Naive thymus-derived CD4-positive, alpha-beta T cell (primary cell): ENCODE measurements at regions of chr6 and their contacts with region 1.

Region 1: GRCh38 chr6:27295301-27296081 is 16.6 kb downstream of the POM121L2 start:
- DNase-seq: no peak
- ATAC-seq: no peak
- H3K4me3 ChIP-seq: no peak overlapping the region
- H3K4me3 Mint-ChIP-seq: peak overlapping the region in 4 of 10 donors; percentile 0 to 81 (median 34)
- H3K27ac ChIP-seq: no peak overlapping the region
- H3K27ac Mint-ChIP-seq: peak overlapping the region in 6 of 9 donors; percentile 44 to 89 (median 57)
- H3K4me1 ChIP-seq: no peaks in the 10 kb centered on the region
- H3K4me1 Mint-ChIP-seq: peaks cover 0 to 4% (median 0%) of the 10 kb centered on the region in 7 donors
- H3K27me3 ChIP-seq: peaks cover 21 to 66% of the 10 kb centered on the region in 2 donors
- H3K27me3 Mint-ChIP-seq: peaks cover 65 to 94% (median 87%) of the 10 kb centered on the region in 5 donors

Region 2: DNA sequence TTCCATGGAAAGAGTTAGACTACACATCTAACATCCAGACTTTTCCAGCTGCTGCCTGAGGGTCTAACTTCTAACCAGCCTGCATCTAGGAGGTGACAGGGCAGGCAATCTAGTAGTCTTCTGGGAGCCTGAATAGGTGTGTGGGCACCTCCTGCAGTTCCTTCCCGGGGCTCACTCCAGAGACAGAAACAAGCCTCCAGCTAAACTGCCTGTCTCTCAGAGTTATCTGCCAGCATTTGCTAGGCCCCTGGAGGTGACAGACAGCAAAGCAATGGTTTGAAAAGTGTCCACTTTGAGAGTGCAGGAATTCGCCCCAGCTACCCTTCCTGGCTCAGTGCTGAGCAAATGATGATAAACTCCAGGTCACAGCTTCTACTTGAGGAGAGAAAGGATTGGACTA is 288.5 kb before region 1 on chr6:
- CTCF ChIA-PET with region 1: no interaction called
- POLR2A ChIA-PET with region 1: no interaction called
- intact Hi-C with region 1: no loop called
- DNase-seq: no peak
- ATAC-seq: no peak
- H3K4me3 ChIP-seq: no peak overlapping the region
- H3K4me3 Mint-ChIP-seq: no peak overlapping the region
- H3K27ac ChIP-seq: no peak overlapping the region
- H3K27ac Mint-ChIP-seq: no peak overlapping the region
- H3K4me1 ChIP-seq: no peaks in the 10 kb centered on the region
- H3K4me1 Mint-ChIP-seq: no peaks in the 10 kb centered on the region
- H3K27me3 ChIP-seq: peaks cover 0 to 6% of the 10 kb centered on the region in 2 donors
- H3K27me3 Mint-ChIP-seq: peaks cover 5 to 49% (median 36%) of the 10 kb centered on the region in 5 donors

Region 3: GRCh38 chr6:27237089-27237803 is 58.2 kb before region 1 on chr6:
- CTCF ChIA-PET with region 1: no interaction called
- POLR2A ChIA-PET with region 1: no interaction called
- intact Hi-C with region 1: loop called in 1 of 2 experiments (anchors 10 kb)
- DNase-seq: peak in 5 of 9 donors; percentile 16 to 50 (median 29)
- ATAC-seq: no peak
- H3K4me3 ChIP-seq: no peak overlapping the region
- H3K4me3 Mint-ChIP-seq: peak overlapping the region in 6 of 10 donors; percentile 7 to 78 (median 43)
- H3K27ac ChIP-seq: no peak overlapping the region
- H3K27ac Mint-ChIP-seq: peak overlapping the region in 6 of 9 donors; percentile 43 to 76 (median 52)
- H3K4me1 ChIP-seq: peaks cover 0 to 6% of the 10 kb centered on the region in 2 donors
- H3K4me1 Mint-ChIP-seq: peaks cover 3 to 30% (median 18%) of the 10 kb centered on the region in 7 donors
- H3K27me3 ChIP-seq: peaks cover 10 to 42% of the 10 kb centered on the region in 2 donors
- H3K27me3 Mint-ChIP-seq: peaks cover 63 to 82% (median 80%) of the 10 kb centered on the region in 5 donors

Region 4: GRCh38 chr6:27280064-27280539 is 15.4 kb before region 1 on chr6:
- CTCF ChIA-PET with region 1: no interaction called
- POLR2A ChIA-PET with region 1: no interaction called
- intact Hi-C with region 1: loop called in 1 of 2 experiments (anchors 2 kb)
- DNase-seq: peak in 1 of 9 donors; percentile 13
- ATAC-seq: no peak
- H3K4me3 ChIP-seq: no peak overlapping the region
- H3K4me3 Mint-ChIP-seq: peak overlapping the region in 5 of 10 donors; percentile 28 to 51 (median 44)
- H3K27ac ChIP-seq: no peak overlapping the region
- H3K27ac Mint-ChIP-seq: peak overlapping the region in 5 of 9 donors; percentile 59 to 83 (median 77)
- H3K4me1 ChIP-seq: no peaks in the 10 kb centered on the region
- H3K4me1 Mint-ChIP-seq: peaks cover 0 to 19% (median 4%) of the 10 kb centered on the region in 7 donors
- H3K27me3 ChIP-seq: peaks cover 32 to 52% of the 10 kb centered on the region in 2 donors
- H3K27me3 Mint-ChIP-seq: peaks cover 74 to 88% (median 86%) of the 10 kb centered on the region in 5 donors

Region 5: GRCh38 chr6:27553123-27553904 is 257.8 kb after region 1 on chr6:
- CTCF ChIA-PET with region 1: no interaction called
- POLR2A ChIA-PET with region 1: no interaction called
- intact Hi-C with region 1: loop called in 1 of 2 experiments (anchors 5 kb)
- DNase-seq: no peak
- ATAC-seq: no peak
- H3K4me3 ChIP-seq: no peak overlapping the region
- H3K4me3 Mint-ChIP-seq: peak overlapping the region in 3 of 10 donors; percentile 6 to 59 (median 49)
- H3K27ac ChIP-seq: no peak overlapping the region
- H3K27ac Mint-ChIP-seq: peak overlapping the region in 2 of 9 donors; percentile 13 to 68
- H3K4me1 ChIP-seq: no peaks in the 10 kb centered on the region
- H3K4me1 Mint-ChIP-seq: peaks cover 3 to 20% (median 4%) of the 10 kb centered on the region in 7 donors
- H3K27me3 ChIP-seq: peaks cover 0 to 10% of the 10 kb centered on the region in 2 donors
- H3K27me3 Mint-ChIP-seq: peaks cover 76 to 91% (median 87%) of the 10 kb centered on the region in 5 donors

Region 6: DNA sequence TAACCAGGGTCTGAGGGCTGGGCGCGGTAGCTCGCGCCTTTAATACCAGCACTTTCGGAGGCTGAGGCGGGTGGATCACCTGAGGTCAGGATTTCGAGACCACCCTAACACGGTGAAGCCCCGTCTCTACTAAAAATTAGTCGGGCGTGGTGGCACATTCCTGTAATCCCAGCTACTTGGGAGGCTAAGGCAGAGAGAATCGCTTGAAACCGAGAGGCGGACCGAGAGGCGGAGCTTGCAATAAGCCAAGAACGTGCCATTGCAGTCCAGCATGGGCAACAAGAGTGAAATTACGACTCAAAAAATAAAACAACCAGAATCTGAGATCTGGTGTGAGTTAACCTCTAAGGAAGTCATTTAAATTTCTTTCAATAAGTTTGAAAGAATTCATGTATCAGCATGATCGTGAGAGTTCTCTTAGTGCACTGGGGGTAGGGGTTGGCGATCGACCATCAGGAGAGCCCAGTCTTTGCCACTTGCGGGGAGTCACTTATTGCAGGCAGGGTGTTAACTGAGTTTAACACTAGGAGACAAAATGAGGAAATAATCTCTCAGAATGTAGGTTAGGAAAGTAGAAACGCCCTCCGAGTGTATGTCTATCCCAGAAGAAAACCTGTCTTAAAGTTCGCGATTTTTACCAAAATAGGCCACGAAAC is 383.9 kb after region 1 on chr6:
- CTCF ChIA-PET with region 1: no interaction called
- POLR2A ChIA-PET with region 1: no interaction called
- intact Hi-C with region 1: loop called in 1 of 2 experiments (anchors 5 kb)
- DNase-seq: no peak
- ATAC-seq: no peak
- H3K4me3 ChIP-seq: no peak overlapping the region
- H3K4me3 Mint-ChIP-seq: peak overlapping the region in 6 of 10 donors; percentile 30 to 77 (median 59)
- H3K27ac ChIP-seq: no peak overlapping the region
- H3K27ac Mint-ChIP-seq: peak overlapping the region in 8 of 9 donors; percentile 16 to 88 (median 68)
- H3K4me1 ChIP-seq: no peaks in the 10 kb centered on the region
- H3K4me1 Mint-ChIP-seq: peaks cover 0 to 27% (median 17%) of the 10 kb centered on the region in 7 donors
- H3K27me3 ChIP-seq: peaks cover 12 to 36% of the 10 kb centered on the region in 2 donors
- H3K27me3 Mint-ChIP-seq: peaks cover 68 to 85% (median 79%) of the 10 kb centered on the region in 5 donors

Region 7: GRCh38 chr6:28789553-28790083 is 1494.1 kb after region 1 on chr6:
- CTCF ChIA-PET with region 1: no interaction called
- POLR2A ChIA-PET with region 1: no interaction called
- intact Hi-C with region 1: loop called in 1 of 2 experiments (anchors 10 kb)
- DNase-seq: no peak
- ATAC-seq: no peak
- H3K4me3 ChIP-seq: no peak overlapping the region
- H3K4me3 Mint-ChIP-seq: peak overlapping the region in 8 of 10 donors; percentile 25 to 60 (median 48)
- H3K27ac ChIP-seq: no peak overlapping the region
- H3K27ac Mint-ChIP-seq: peak overlapping the region in 6 of 9 donors; percentile 37 to 73 (median 50)
- H3K4me1 ChIP-seq: no peaks in the 10 kb centered on the region
- H3K4me1 Mint-ChIP-seq: peaks cover 4 to 21% (median 12%) of the 10 kb centered on the region in 7 donors
- H3K27me3 ChIP-seq: peaks cover 11 to 46% of the 10 kb centered on the region in 2 donors
- H3K27me3 Mint-ChIP-seq: peaks cover 89 to 97% (median 93%) of the 10 kb centered on the region in 5 donors

Region 8: DNA sequence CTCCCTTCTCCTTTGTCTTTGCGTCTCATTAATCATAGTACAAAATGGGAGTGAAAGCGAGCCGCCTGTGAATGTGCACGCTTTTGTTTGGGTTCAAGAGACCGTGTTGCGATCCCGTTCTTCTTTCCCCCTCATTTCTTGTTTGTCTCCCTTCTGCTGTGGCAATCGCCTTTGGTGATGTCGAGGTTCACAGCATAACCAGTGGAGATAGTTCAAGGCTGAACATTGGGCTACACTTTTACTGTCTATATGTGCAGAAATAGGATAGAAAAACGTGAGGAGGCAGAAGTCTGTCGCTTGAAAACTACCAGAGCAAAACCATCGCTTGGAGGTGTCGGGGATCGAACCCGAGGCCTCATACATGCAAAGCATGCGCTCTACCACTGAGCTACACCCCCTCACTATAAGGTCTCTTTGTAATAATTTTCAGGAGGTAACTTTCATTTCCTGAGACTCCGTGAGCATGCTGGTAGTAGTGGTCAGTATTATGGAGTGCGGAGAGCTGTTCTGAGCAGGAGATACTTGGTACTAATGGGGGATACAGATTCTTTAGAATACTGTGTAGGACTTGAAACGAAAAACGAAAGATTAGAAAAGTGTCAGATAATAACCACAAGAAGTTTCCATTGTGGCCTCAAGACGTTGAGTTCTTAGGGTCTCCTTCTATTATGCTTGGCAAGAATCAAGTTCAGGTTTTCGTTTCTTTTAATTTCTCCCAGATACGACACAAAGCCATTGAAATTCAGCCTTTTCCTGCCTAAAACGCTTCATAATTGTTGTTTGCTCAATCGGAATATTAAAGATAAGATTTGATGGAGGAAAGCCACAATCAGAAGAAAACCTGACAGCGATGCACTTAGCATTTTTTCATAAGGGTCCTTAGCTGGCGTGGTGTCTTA is 1521.7 kb after region 1 on chr6:
- CTCF ChIA-PET with region 1: no interaction called
- POLR2A ChIA-PET with region 1: no interaction called
- intact Hi-C with region 1: loop called (anchors 2 to 10 kb)
- DNase-seq: no peak
- ATAC-seq: no peak
- H3K4me3 ChIP-seq: no peak overlapping the region
- H3K4me3 Mint-ChIP-seq: peak overlapping the region in 2 of 10 donors; percentile 7 to 8
- H3K27ac ChIP-seq: no peak overlapping the region
- H3K27ac Mint-ChIP-seq: peak overlapping the region in 2 of 9 donors; percentile 44 to 49
- H3K4me1 ChIP-seq: no peaks in the 10 kb centered on the region
- H3K4me1 Mint-ChIP-seq: peaks cover 2 to 21% (median 9%) of the 10 kb centered on the region in 7 donors
- H3K27me3 ChIP-seq: peaks cover 23 to 45% of the 10 kb centered on the region in 2 donors
- H3K27me3 Mint-ChIP-seq: peaks cover 75 to 91% (median 88%) of the 10 kb centered on the region in 5 donors